Kidney (tissue), 22 donors: ENCODE measurements at regions of chr3 and their contacts with region 1.

Region 1: GRCh38 chr3:56988458-56989168 is 71.9 kb upstream of the SPATA12 start:
- DNase-seq: peak in 4 of 5 donors; percentile 87 to 96 (median 92)
- H3K4me3 ChIP-seq: no peak overlapping the region
- H3K27ac ChIP-seq: no peak overlapping the region
- H3K4me1 ChIP-seq: peaks cover 0 to 7% (median 5%) of the 10 kb centered on the region in 3 donors
- H3K27me3 ChIP-seq: no peaks in the 10 kb centered on the region
- CTCF ChIP-seq: peak; percentile 82

Region 2: GRCh38 chr3:56702490-56703315 is 285.9 kb before region 1 on chr3:
- intact Hi-C with region 1: loop called (anchors 2 kb)
- DNase-seq: peak in 3 of 5 donors; percentile 44 to 87 (median 83)
- H3K4me3 ChIP-seq: no peak overlapping the region
- H3K27ac ChIP-seq: no peak overlapping the region
- H3K4me1 ChIP-seq: no peaks in the 10 kb centered on the region
- H3K27me3 ChIP-seq: no peaks in the 10 kb centered on the region
- CTCF ChIP-seq: peak; percentile 91

Region 3: GRCh38 chr3:56725175-56725574 is 263.4 kb before region 1 on chr3:
- intact Hi-C with region 1: no loop called
- DNase-seq: no peak
- H3K4me3 ChIP-seq: no peak overlapping the region
- H3K27ac ChIP-seq: peak overlapping the region in 1 of 2 donors; percentile 59
- H3K4me1 ChIP-seq: peaks cover 0 to 6% (median 5%) of the 10 kb centered on the region in 3 donors
- H3K27me3 ChIP-seq: no peaks in the 10 kb centered on the region
- CTCF ChIP-seq: no peak

Region 4: GRCh38 chr3:56758539-56758981 is 230.1 kb before region 1 on chr3:
- intact Hi-C with region 1: no loop called
- DNase-seq: peak in 3 of 5 donors; percentile 69 to 91 (median 89)
- H3K4me3 ChIP-seq: peak overlapping the region in 1 of 3 donors; percentile 24
- H3K27ac ChIP-seq: peak overlapping the region; percentile 34 to 74
- H3K4me1 ChIP-seq: peaks cover 3 to 12% (median 10%) of the 10 kb centered on the region in 3 donors
- H3K27me3 ChIP-seq: no peaks in the 10 kb centered on the region
- CTCF ChIP-seq: no peak

Region 5: DNA sequence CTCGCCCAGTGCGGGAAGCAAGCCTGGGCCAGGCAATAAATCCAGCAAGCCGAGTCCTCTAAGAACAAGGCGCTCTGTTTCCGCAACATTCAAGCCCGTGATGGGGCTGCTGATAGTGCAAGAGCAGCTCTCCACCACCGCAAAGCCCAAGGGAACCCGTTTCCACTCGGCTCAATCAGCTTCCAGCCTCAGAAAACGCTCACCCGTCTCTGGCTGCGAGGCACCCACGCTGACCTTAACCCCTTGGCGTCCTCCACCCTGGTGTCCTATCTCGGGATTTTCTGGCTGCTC is 89.7 kb after region 1 on chr3:
- intact Hi-C with region 1: no loop called
- DNase-seq: peak in 4 of 5 donors; percentile 64 to 79 (median 78)
- H3K4me3 ChIP-seq: peak overlapping the region; percentile 74 to 85 (median 81)
- H3K27ac ChIP-seq: peak overlapping the region; percentile 22 to 80
- H3K4me1 ChIP-seq: peaks cover 0 to 10% (median 10%) of the 10 kb centered on the region in 3 donors
- H3K27me3 ChIP-seq: no peaks in the 10 kb centered on the region
- CTCF ChIP-seq: no peak